ENCODE measurements at regions of chr1 and their contacts with region 1.

Region 1: DNA sequence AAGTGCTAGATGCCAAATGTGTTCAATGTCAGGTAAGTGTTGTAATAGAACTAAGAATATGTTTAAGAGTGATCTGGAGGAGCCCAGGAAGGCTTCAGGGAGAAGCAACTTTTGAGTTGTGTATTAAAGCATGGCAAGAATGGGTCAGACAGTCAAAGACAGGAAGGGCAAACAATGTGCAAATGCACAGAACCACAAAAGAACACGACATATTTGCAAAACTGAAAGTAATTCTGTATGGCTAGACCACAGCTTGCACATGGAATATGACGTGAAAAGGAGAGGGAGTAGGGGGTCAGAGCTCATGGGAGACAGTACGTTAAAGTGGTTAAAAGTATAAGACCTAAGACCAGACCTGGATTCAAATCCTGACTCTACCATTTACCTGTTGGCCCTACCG is 7.1 kb upstream of the SORT1 start:
- DNase-seq: no peak
- ATAC-seq: no peak
- H3K4me3 ChIP-seq: no peak overlapping the region
- H3K4me3 Mint-ChIP-seq: peak overlapping the region in 1 of 10 donors; percentile 13
- H3K27ac ChIP-seq: no peak overlapping the region
- H3K27ac Mint-ChIP-seq: peak overlapping the region; percentile 9 to 85 (median 68)
- H3K4me1 ChIP-seq: peaks cover 0 to 9% of the 10 kb centered on the region in 2 donors
- H3K4me1 Mint-ChIP-seq: peaks cover 20 to 34% (median 25%) of the 10 kb centered on the region in 7 donors
- H3K27me3 ChIP-seq: no peaks in the 10 kb centered on the region
- H3K27me3 Mint-ChIP-seq: no peaks in the 10 kb centered on the region

Region 2: GRCh38 chr1:109277434-109278204 is 127.2 kb before region 1 on chr1:
- CTCF ChIA-PET with region 1: interaction called, 62 read pairs
- POLR2A ChIA-PET with region 1: no interaction called
- intact Hi-C with region 1: no loop called
- DNase-seq: peak in 7 of 9 donors; percentile 20 to 72 (median 35)
- ATAC-seq: peak; percentile 77
- H3K4me3 ChIP-seq: no peak overlapping the region
- H3K4me3 Mint-ChIP-seq: no peak overlapping the region
- H3K27ac ChIP-seq: no peak overlapping the region
- H3K27ac Mint-ChIP-seq: peak overlapping the region in 1 of 9 donors; percentile 44
- H3K4me1 ChIP-seq: peaks cover 3% of the 10 kb centered on the region in 2 donors
- H3K4me1 Mint-ChIP-seq: peaks cover 0 to 26% (median 10%) of the 10 kb centered on the region in 7 donors
- H3K27me3 ChIP-seq: no peaks in the 10 kb centered on the region
- H3K27me3 Mint-ChIP-seq: no peaks in the 10 kb centered on the region

Region 3: GRCh38 chr1:110272045-110272444 is 867.2 kb after region 1 on chr1:
- CTCF ChIA-PET with region 1: no interaction called
- POLR2A ChIA-PET with region 1: no interaction called
- intact Hi-C with region 1: no loop called
- DNase-seq: no peak
- ATAC-seq: no peak
- H3K4me3 ChIP-seq: no peak overlapping the region
- H3K4me3 Mint-ChIP-seq: no peak overlapping the region
- H3K27ac ChIP-seq: no peak overlapping the region
- H3K27ac Mint-ChIP-seq: no peak overlapping the region
- H3K4me1 ChIP-seq: no peaks in the 10 kb centered on the region
- H3K4me1 Mint-ChIP-seq: peaks cover 0 to 2% (median 0%) of the 10 kb centered on the region in 7 donors
- H3K27me3 ChIP-seq: no peaks in the 10 kb centered on the region
- H3K27me3 Mint-ChIP-seq: peaks cover 4 to 29% (median 9%) of the 10 kb centered on the region in 5 donors

Measured in naive thymus-derived CD4-positive, alpha-beta T cell (primary cell).